ENCODE measurements at regions of chr13 and their contacts with region 1.

Region 1: DNA sequence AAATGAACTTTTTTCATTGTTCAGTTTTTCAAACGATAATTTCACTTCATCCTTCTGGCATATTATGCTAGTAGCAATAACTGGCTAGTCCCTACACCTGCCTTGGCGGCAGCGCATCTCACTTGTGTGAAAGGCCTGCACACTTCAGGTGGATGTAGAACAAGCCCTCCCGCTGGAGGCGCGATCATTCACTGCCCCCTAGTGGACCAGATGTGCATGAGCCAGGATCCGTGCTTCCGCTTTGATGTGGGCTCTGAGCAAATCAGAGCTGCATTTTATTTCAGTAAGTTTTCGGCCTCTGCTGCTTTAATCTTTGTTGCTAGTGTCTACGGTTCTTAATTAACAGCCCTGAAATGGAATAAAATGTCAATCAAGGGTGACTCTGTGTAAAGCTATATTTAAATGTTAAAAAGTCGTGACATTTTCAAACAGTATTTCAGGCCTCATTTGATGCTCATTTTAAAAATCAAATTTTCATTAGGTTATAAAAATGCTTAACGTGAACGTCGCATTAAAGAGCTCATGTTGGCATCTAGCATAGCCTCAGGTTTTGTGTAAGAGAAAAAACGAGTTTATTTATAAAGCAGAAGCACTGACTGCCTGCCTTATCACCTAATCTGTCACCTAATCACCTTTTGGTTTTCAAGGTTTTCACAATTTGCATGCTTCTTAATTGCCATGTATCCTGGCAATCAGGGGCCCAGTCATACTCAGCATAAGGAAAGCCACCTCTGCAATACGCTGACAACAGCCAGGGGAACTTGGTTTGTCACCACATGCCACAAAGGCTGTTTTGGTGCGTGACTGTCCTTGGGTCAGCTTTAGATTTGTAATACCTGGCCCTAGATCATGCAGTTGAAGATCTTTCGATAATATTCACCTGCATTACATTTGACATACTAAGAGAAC is 112.2 kb downstream of the TEX26 start:
- DNase-seq: peak; percentile 84
- H3K4me3 ChIP-seq: no peak overlapping the region
- H3K27ac ChIP-seq: no peak overlapping the region
- H3K4me1 ChIP-seq: peaks cover 12% of the 10 kb centered on the region
- CTCF ChIP-seq: peak; percentile 98

Region 2: DNA sequence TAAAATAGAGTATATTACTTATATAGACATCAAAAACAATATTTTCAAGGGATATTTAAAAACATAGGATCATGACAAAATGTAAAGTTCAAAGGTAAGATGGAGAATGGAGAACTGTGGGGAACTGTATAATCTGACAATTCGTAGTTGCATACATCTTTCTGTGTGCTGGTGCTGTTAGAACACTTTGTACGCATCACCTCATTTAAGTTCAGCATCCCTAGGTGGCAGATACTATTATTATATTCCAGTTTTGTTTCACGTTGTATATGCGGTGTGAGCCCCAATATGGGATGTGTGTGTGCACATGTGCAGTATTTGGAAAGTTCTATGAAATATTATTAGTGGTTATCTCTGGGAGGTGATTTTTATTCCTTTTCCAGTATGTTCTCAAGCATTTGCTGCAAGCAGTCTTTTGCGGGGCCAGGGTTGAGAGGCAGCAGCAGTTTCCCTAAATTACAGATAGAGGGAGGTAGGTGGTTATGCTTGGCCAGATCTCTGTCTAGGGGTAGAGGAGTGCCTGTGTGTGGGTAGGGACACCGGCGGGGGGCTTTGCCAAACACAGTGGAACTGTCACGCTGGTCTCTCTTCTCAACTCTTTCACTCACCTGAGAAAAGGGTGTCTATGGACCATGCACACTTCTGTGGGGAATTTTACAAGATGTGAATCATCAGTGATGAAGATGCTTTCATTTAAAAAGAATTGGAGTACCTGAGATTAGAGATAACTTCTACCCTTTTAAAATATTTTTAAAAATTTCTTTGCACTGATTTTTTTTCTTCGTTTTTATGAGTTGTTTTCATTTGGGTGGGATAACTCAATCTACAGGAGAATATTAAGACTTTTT is 364.9 kb before region 1 on chr13:
- CTCF ChIA-PET with region 1: no interaction called
- POLR2A ChIA-PET with region 1: no interaction called
- intact Hi-C with region 1: loop called (anchors 5 kb)
- DNase-seq: peak; percentile 69
- H3K4me3 ChIP-seq: no peak overlapping the region
- H3K27ac ChIP-seq: no peak overlapping the region
- H3K4me1 ChIP-seq: peaks cover 4% of the 10 kb centered on the region
- CTCF ChIP-seq: peak; percentile 88

Region 3: GRCh38 chr13:30978981-30979956 is 65.4 kb before region 1 on chr13:
- CTCF ChIA-PET with region 1: interaction called, 6 read pairs
- POLR2A ChIA-PET with region 1: no interaction called
- intact Hi-C with region 1: loop called (anchors 1 kb)
- DNase-seq: peak; percentile 60
- H3K4me3 ChIP-seq: no peak overlapping the region
- H3K27ac ChIP-seq: no peak overlapping the region
- H3K4me1 ChIP-seq: no peaks in the 10 kb centered on the region
- CTCF ChIP-seq: peak; percentile 89

Measured in OCI-LY7 (cell line).